ENCODE measurements at regions of chr1 and their contacts with region 1.

Region 1: GRCh38 chr1:57325117-57325516 is 98.7 kb downstream of the DAB1 start:
- DNase-seq: no peak
- H3K4me3 ChIP-seq: no peak overlapping the region
- H3K27ac ChIP-seq: no peak overlapping the region
- H3K4me1 ChIP-seq: no peaks in the 10 kb centered on the region
- CTCF ChIP-seq: no peak

Region 2: GRCh38 chr1:57483954-57484353 is 158.8 kb after region 1 on chr1:
- CTCF ChIA-PET with region 1: no interaction called
- POLR2A ChIA-PET with region 1: no interaction called
- intact Hi-C with region 1: loop called (anchors 5 kb)
- DNase-seq: no peak
- H3K4me3 ChIP-seq: no peak overlapping the region
- H3K27ac ChIP-seq: no peak overlapping the region
- H3K4me1 ChIP-seq: no peaks in the 10 kb centered on the region
- CTCF ChIP-seq: no peak